WTC11 (cell line): ENCODE measurements at regions of chr15 and their contacts with region 1.

Region 1: GRCh38 chr15:73908030-73908821 is 18.0 kb upstream of the LOXL1 start:
- DNase-seq: peak; percentile 95
- ATAC-seq: peak; percentile 99
- H3K4me3 Mint-ChIP-seq: no peak overlapping the region
- H3K27ac Mint-ChIP-seq: no peak overlapping the region
- H3K4me1 Mint-ChIP-seq: peaks cover 5% of the 10 kb centered on the region
- H3K27me3 Mint-ChIP-seq: peaks cover 7% of the 10 kb centered on the region
- CTCF ChIP-seq: peak; percentile 86

Region 2: GRCh38 chr15:73897441-73898261 is 10.6 kb before region 1 on chr15:
- CTCF ChIA-PET with region 1: interaction called, 15 read pairs
- POLR2A ChIA-PET with region 1: no interaction called
- DNase-seq: peak; percentile 78
- ATAC-seq: peak; percentile 92
- H3K4me3 Mint-ChIP-seq: no peak overlapping the region
- H3K27ac Mint-ChIP-seq: no peak overlapping the region
- H3K4me1 Mint-ChIP-seq: peaks cover 14% of the 10 kb centered on the region
- H3K27me3 Mint-ChIP-seq: no peaks in the 10 kb centered on the region
- CTCF ChIP-seq: peak; percentile 99

Region 3: DNA sequence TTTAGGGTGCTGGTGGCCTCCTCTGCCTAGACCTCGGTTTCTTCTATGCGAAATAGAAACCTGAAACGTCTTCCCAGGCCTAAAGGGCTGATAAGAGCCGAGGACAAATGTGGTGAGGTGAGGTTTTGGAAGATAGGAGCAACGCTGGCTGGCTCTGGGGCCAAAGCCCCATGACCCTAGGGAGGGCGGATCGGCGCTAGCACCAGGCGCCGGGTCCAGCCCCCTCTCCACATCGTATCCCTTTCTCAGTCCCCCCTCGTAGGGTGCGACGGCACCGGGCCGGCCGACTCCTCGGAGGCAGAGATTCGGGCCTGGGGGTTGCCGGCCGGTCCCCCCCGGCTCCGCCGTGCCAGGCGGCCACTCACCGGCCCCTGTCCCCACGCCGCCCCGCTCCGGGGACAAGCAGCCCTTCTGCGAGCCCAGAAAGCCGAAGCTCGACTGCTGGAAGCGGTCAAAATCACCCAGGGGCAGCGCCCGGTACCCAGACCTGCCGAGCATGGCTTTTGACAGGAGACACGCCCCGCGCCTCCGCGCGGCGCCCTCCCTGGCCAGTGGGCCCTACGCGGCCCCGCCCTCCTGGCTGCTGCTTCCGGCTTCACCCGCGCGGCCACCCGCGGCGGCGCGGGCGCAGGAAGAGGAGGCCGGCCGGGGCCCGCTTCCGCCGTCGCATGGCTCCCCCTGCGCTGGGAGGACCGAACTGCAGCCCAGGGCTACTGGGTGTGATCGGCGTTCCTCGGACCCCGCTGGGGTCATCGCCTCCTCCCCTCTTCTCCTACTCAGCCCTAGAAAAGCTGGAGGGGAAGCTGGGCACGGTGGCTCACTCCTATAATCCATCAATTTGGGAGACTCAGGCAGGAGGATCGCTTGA is 83.7 kb after region 1 on chr15 and contains the start of gene STOML1:
- CTCF ChIA-PET with region 1: interaction called, 12 read pairs
- POLR2A ChIA-PET with region 1: no interaction called
- DNase-seq: peak; percentile 97
- ATAC-seq: peak; percentile 68
- H3K4me3 Mint-ChIP-seq: peak within 1 kb of the TSS; percentile 74
- H3K27ac Mint-ChIP-seq: no peak within 1 kb of the TSS
- H3K4me1 Mint-ChIP-seq: peaks cover 30% of the 10 kb centered on the region
- H3K27me3 Mint-ChIP-seq: peaks cover 13% of the 10 kb centered on the region
- CTCF ChIP-seq: peak; percentile 81
- total RNA-seq, gene STOML1: 5.0 to 5.5 TPM (median 5.4 TPM) in 3 replicates